Left ventricle myocardium superior (tissue), 1 donor: ENCODE measurements at regions of chr17 and their contacts with region 1.

Region 1: GRCh38 chr17:58331815-58332777 is 3.5 kb upstream of the TSPOAP1 start:
- DNase-seq: peak; percentile 82
- ATAC-seq: peak; percentile 64

Region 2: DNA sequence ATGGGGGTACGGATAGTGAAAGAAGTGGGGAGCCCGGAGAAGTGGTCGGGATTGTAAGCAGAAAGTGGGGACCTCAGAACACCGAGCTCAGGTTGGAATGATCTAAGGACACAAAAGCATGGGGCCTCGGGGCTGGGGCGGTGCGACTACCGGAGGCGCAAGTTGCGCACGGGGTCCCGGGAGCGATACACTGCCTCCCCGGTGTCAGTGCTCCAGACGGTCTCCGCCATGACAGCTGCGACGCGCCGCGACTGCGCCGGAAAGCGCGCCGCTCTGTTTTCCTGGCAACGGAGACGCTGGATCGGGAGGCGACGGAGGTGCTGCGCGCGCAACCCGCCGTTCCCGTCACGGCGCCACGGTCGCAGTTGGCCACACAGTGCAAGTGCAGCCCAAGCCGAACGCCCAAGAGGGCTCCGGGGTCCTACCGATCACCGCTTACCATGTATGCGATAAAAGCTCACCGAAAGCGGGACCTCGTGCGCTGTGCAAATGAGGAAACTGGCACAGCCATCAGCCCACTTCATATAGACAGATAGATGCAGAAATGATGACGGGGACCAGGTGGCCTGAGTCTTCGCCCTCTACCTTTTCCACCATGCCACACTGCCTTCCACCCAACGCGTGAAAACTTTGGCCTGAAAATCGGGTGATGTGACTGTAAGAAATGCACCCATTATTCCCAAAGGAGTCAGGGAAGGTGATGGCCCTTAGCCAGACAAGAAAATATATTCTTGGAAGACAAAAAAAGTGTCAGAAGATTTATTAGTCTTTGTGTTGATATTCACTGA is 112.9 kb before region 1 on chr17 and contains the start of gene MKS1:
- intact Hi-C with region 1: no loop called
- DNase-seq: peak; percentile 98
- ATAC-seq: peak; percentile 99
- total RNA-seq, gene MKS1: 10.1 TPM

Region 3: GRCh38 chr17:58427807-58428206 is 95.7 kb after region 1 on chr17:
- intact Hi-C with region 1: loop called (anchors 5 kb)
- DNase-seq: no peak
- ATAC-seq: no peak